Ascending aorta (tissue), 2 donors: ENCODE measurements at regions of chr7 and their contacts with region 1.

Region 1: DNA sequence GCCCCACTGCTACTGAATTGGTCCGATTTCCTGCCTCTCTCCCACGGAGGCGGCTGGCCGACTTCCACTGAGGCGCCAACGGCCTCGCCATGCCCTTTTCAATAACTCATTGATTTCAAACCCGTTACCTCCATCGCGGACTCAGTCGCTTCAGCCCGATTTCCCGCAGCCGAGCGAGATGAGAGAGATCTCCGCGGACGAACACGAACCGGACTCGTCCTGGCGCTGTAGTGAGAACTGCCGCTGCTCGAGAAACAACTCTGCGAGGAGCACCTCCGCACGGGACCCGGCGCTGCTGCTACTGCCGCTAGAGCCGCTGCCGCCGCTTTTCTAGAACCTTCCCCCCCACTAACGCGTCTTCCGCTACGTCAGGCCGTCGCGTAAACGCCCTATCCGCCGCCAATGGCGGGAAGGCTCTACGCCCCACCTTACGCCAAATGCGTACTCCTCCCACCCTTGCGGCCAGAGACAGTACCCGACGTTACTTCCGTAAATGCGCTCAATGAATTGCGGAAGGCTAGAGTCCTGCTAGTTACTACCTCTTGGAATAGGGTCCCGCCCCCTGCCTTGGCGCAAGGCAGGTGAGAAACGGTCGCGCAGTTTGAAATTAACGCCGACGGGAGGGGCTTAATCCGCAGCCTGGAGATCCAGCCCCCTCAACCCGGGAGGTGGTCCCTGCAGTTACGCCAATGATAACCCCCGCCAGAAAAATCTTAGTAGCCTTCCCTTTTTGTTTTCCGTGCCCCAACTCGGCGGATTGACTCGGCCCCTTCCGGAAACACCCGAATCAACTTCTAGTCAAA is at the start of gene HNRNPA2B1:
- DNase-seq: peak; percentile 93 to 99
- H3K4me3 ChIP-seq: peak within 1 kb of the TSS; percentile 84 to 95
- H3K27ac ChIP-seq: peak within 1 kb of the TSS; percentile 99 to 100
- H3K4me1 ChIP-seq: peaks cover 0 to 43% of the 10 kb centered on the region in 2 donors
- H3K27me3 ChIP-seq: no peaks in the 10 kb centered on the region
- CTCF ChIP-seq: no peak
- total RNA-seq, gene HNRNPA2B1: 57.0 TPM

Region 2: DNA sequence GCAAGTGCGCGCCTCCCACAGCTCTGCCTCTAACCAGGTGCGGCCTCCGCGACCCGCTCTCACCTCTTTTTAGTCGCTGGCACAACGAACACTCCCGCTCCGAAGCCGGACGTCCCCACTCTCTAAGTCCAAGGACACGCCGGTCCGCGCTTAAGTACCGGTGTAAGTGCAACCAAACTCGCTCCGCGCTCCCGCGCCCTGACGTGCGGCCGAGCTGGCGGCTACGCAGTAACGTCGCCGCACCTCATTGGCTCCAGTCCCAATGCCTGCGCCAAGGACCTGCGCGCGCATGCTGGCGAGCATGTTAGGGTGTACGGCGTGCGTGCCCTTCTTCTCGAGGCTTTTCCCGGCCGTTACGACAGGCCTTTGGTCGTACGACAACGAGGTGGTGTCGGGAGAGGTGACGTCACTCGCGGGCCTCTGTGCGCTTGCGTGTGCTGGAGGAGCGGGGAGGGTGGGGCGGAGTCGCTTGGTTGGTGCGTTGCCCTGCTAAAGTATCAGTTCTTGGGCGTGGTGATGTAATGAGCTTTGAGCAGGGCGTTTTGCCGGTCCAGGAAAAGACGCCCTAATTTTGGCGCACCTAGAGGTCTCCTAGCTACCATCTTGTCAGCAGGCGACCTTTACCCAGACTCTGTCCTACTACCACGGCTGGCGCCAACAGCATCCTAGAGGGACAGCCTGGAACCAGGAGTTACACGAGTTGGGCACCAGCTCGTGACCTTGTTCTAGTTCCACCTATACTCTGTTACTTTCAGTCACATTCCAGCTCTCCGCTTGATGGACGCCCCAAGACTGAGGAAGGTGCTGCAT is 1075.3 kb before region 1 on chr7 and contains the start of gene CYCS:
- intact Hi-C with region 1: loop called (anchors 10 kb)
- DNase-seq: peak; percentile 98 to 100
- H3K4me3 ChIP-seq: peak within 1 kb of the TSS; percentile 82 to 100
- H3K27ac ChIP-seq: peak within 1 kb of the TSS; percentile 90 to 99
- H3K4me1 ChIP-seq: peaks cover 0 to 4% of the 10 kb centered on the region in 2 donors
- H3K27me3 ChIP-seq: no peaks in the 10 kb centered on the region
- CTCF ChIP-seq: no peak
- total RNA-seq, gene CYCS: 11.5 TPM

Region 3: DNA sequence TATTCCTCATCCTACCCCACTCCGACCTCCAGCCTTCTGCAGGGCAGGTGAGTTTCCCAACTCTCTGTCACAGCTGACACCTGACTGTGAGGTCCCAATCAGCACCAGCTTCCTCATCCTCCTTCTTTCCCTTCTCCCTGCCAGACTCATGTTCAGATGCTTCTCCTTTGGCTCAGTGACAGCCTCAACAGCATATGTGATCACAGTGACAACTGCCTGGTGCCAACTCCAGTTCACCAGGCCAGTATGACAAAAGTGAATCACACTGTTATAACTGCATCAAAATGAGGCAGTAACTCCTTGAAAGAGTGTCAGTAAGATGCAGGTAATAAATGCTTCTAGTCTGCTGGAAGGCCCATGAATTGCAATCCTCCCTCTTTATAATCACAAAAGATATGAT is 95.4 kb before region 1 on chr7:
- intact Hi-C with region 1: no loop called
- DNase-seq: no peak
- H3K4me3 ChIP-seq: no peak overlapping the region
- H3K27ac ChIP-seq: no peak overlapping the region
- H3K4me1 ChIP-seq: no peaks in the 10 kb centered on the region
- H3K27me3 ChIP-seq: no peaks in the 10 kb centered on the region
- CTCF ChIP-seq: no peak

Region 4: GRCh38 chr7:26864309-26865093 is 663.9 kb after region 1 on chr7 and contains the start of gene SKAP2:
- intact Hi-C with region 1: loop called (anchors 10 kb)
- DNase-seq: peak; percentile 92 to 99
- H3K4me3 ChIP-seq: peak within 1 kb of the TSS; percentile 66 to 89
- H3K27ac ChIP-seq: peak within 1 kb of the TSS; percentile 87 to 90
- H3K4me1 ChIP-seq: no peaks in the 10 kb centered on the region
- H3K27me3 ChIP-seq: no peaks in the 10 kb centered on the region
- CTCF ChIP-seq: peak in 1 of 3 experiments; percentile 11
- total RNA-seq, gene SKAP2: 50.2 TPM

Region 5: DNA sequence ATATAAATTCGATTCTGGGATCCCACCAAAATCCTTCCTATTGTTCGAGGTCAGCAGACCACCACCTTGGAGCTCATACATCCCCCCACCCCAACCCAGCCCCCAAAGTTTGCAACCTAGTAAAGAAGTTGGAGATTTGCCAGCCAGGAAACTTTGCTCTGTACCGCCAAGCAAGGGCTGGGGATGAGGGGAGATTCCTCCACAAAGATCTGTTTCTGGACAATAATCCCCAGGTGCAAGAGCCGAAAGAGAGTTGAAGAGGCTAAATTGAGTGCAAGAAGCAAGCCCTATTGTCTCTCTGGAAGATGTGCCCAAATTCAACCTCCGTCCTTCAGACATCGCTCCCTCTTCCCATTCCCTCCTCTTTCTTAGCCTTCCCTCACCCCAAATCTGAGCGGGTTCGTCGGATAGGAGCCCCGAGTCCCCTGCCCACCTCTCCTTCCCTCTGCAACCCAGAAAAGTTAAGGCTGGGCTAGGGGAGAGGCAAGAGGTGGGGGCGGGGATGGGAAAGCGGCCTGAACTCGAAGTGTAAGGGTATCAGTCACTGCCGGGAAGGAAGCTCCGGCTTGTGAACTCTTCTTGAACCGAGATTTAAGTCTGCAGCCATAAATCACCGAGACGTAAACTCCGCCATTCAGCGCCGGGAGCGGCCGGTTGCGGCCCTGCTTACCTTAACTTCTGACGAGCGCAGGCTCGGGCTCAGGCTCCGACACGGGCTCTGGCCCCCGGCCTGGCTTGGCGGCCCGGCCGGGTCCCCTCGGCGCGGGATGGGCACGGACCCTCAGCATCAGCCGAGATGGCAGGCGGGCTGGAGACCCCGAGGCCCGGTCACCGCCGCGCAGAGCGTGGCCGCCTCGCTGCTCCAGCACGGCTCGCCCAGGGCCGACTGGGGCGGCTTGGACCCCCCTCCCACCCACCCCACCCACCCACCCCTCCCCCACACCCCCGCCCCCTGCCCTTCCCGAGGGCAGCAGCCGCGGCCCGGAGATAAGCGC is 912.6 kb after region 1 on chr7:
- intact Hi-C with region 1: loop called (anchors 2 kb)
- DNase-seq: no peak
- H3K4me3 ChIP-seq: peak overlapping the region; percentile 63 to 81
- H3K27ac ChIP-seq: peak overlapping the region; percentile 89 to 97
- H3K4me1 ChIP-seq: peaks cover 8 to 15% of the 10 kb centered on the region in 2 donors
- H3K27me3 ChIP-seq: no peaks in the 10 kb centered on the region
- CTCF ChIP-seq: no peak